Spleen (tissue), 13 donors: ENCODE measurements at regions of chr5 and their contacts with region 1.

Region 1: DNA sequence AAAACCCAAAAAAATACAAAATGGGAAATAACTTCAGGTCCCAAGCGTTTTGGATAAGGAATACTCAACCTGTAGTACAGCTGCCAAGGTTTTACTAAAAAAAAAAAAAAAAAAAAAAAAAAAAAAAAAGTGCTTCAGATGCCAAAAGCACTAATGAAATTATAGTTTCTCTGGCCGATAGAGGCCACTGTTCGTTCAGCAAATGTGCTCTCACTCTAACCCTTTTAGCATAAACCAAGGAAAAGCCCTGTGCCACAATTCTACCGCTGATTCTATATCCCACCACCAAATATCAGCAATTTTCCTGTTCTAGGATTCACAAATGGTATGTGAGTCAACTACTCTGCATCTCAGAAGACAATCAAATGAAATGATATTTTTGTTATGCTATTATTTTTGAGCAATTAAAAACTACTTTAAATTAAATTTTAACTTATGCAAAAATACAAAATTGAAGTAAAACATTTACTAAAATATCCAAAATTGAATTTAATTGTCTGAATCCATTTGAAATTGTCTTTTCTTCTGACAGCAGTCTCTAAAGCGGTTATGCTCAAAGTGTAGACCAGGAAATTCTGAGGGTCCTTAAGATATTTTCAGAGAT is 79.8 kb downstream of the RICTOR start:
- DNase-seq: no peak
- H3K4me3 ChIP-seq: no peak overlapping the region
- H3K27ac ChIP-seq: no peak overlapping the region
- H3K4me1 ChIP-seq: no peaks in the 10 kb centered on the region
- H3K27me3 ChIP-seq: no peaks in the 10 kb centered on the region
- CTCF ChIP-seq: peak in 8 of 11 experiments; percentile 22 to 59 (median 39)
- POLR2A ChIP-seq: no peak

Region 2: DNA sequence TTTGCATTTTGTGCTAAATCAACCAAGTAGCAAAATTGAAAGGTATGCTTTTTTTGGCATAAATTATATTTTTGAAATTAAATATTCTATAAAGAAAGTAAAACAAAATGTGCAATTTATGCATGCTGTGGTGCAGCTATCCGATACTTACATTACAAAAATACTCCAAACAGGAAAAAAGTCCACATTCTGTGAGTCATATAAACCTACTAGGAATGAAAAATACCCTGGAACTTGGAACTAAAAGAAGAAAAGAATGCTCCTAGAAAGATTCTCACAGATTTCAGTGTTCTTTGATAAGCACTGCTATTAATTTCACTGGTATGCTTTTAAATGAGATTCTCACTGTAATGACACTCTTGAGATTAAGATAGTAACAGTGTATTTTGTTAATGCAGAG is 56.0 kb before region 1 on chr5:
- intact Hi-C with region 1: no loop called
- DNase-seq: no peak
- H3K4me3 ChIP-seq: no peak overlapping the region
- H3K27ac ChIP-seq: no peak overlapping the region
- H3K4me1 ChIP-seq: no peaks in the 10 kb centered on the region
- H3K27me3 ChIP-seq: no peaks in the 10 kb centered on the region
- CTCF ChIP-seq: no peak
- POLR2A ChIP-seq: no peak

Region 3: GRCh38 chr5:39080597-39081204 is 86.3 kb after region 1 on chr5:
- intact Hi-C with region 1: loop called (anchors 10 kb)
- DNase-seq: no peak
- H3K4me3 ChIP-seq: no peak overlapping the region
- H3K27ac ChIP-seq: no peak overlapping the region
- H3K4me1 ChIP-seq: peaks cover 3 to 32% (median 21%) of the 10 kb centered on the region in 6 donors
- H3K27me3 ChIP-seq: peaks cover 0 to 12% (median 0%) of the 10 kb centered on the region in 7 donors
- CTCF ChIP-seq: peak; percentile 54 to 90 (median 82)
- POLR2A ChIP-seq: no peak